H1 (cell line): ENCODE measurements at regions of chr17 and their contacts with region 1.

Region 1: GRCh38 chr17:32659419-32659842 is 172.6 kb downstream of the CDK5R1 start:
- DNase-seq: peak; percentile 39 to 86
- H3K4me3 ChIP-seq: no peak overlapping the region
- H3K27ac ChIP-seq: no peak overlapping the region
- H3K4me1 ChIP-seq: no peaks in the 10 kb centered on the region
- H3K27me3 ChIP-seq: no peaks in the 10 kb centered on the region
- CTCF ChIP-seq: peak; percentile 77 to 96 (median 90)
- EP300 ChIP-seq: no peak
- POLR2A ChIP-seq: no peak
- RAD21 ChIP-seq: peak; percentile 74 to 76

Region 2: GRCh38 chr17:32648450-32648849 is 11.0 kb before region 1 on chr17:
- CTCF ChIA-PET with region 1: interaction called, 26 read pairs
- POLR2A ChIA-PET with region 1: no interaction called
- DNase-seq: no peak
- H3K4me3 ChIP-seq: no peak overlapping the region
- H3K27ac ChIP-seq: no peak overlapping the region
- H3K4me1 ChIP-seq: no peaks in the 10 kb centered on the region
- H3K27me3 ChIP-seq: no peaks in the 10 kb centered on the region
- CTCF ChIP-seq: no peak
- EP300 ChIP-seq: no peak
- POLR2A ChIP-seq: no peak
- RAD21 ChIP-seq: no peak

Region 3: GRCh38 chr17:32671896-32672295 is 12.5 kb after region 1 on chr17:
- CTCF ChIA-PET with region 1: interaction called, 20 read pairs
- POLR2A ChIA-PET with region 1: interaction called, 4 read pairs
- DNase-seq: no peak
- H3K4me3 ChIP-seq: no peak overlapping the region
- H3K27ac ChIP-seq: no peak overlapping the region
- H3K4me1 ChIP-seq: no peaks in the 10 kb centered on the region; a peak in 1 of 7 replicates
- H3K27me3 ChIP-seq: no peaks in the 10 kb centered on the region
- CTCF ChIP-seq: no peak
- EP300 ChIP-seq: no peak
- POLR2A ChIP-seq: no peak
- RAD21 ChIP-seq: no peak

Region 4: DNA sequence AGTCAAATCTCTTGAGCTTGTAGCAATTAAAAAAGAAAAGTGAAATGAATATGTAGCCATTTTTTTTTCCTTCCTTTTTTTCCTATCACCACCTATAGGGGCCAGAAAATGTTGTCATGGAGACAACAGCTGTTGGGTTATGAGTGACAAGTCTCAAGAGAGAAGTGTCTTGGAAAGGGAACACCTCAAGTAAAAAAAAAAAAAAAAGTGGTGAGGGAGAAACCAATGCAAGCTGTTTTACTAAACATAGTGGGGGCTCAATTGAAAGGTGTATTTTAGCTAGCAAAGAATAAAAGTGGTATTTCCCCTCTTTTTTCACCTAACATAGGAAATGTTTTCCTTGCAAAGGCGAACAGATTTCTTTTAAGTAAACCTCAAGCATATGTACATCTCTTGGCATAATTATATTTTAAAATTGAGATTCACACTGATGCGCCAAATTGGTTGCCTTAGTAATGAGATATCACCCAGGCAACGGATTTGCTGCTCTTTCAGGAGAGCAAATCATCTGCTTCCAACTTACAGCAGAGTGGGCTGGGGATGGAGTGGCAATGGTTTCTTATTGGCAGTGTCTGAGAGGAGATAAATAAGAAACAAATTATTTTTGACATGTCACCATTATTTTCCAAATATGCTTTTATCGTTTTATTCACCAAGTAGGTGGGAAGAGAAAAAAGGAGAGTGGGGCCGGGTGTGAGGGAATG is 33.9 kb after region 1 on chr17:
- CTCF ChIA-PET with region 1: interaction called, 11 read pairs
- POLR2A ChIA-PET with region 1: no interaction called
- DNase-seq: no peak
- H3K4me3 ChIP-seq: no peak overlapping the region
- H3K27ac ChIP-seq: no peak overlapping the region
- H3K4me1 ChIP-seq: no peaks in the 10 kb centered on the region
- H3K27me3 ChIP-seq: no peaks in the 10 kb centered on the region
- CTCF ChIP-seq: no peak
- EP300 ChIP-seq: no peak
- POLR2A ChIP-seq: no peak
- RAD21 ChIP-seq: no peak

Region 5: DNA sequence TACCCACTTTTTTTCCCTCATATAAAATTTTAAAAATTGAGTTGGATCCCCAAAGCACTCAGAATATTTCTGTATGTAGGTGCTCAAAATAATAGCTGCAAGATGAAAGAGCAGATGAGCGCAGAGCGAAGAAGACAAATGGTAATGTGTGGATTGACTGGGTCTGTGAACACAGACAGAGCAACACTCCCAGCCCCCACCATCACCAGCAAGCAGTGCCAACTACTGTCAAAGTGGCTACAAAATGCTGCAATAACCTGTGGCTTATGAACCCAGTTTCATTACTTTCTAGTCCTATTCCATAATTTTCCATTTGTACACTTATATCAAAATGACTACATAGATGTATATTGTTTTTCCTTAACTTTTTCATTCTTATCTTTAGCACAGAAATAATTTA is 80.3 kb after region 1 on chr17:
- CTCF ChIA-PET with region 1: no interaction called
- POLR2A ChIA-PET with region 1: no interaction called
- DNase-seq: no peak
- H3K4me3 ChIP-seq: no peak overlapping the region
- H3K27ac ChIP-seq: no peak overlapping the region
- H3K4me1 ChIP-seq: no peaks in the 10 kb centered on the region
- H3K27me3 ChIP-seq: no peaks in the 10 kb centered on the region
- CTCF ChIP-seq: no peak
- EP300 ChIP-seq: no peak
- POLR2A ChIP-seq: no peak
- RAD21 ChIP-seq: no peak

Region 6: DNA sequence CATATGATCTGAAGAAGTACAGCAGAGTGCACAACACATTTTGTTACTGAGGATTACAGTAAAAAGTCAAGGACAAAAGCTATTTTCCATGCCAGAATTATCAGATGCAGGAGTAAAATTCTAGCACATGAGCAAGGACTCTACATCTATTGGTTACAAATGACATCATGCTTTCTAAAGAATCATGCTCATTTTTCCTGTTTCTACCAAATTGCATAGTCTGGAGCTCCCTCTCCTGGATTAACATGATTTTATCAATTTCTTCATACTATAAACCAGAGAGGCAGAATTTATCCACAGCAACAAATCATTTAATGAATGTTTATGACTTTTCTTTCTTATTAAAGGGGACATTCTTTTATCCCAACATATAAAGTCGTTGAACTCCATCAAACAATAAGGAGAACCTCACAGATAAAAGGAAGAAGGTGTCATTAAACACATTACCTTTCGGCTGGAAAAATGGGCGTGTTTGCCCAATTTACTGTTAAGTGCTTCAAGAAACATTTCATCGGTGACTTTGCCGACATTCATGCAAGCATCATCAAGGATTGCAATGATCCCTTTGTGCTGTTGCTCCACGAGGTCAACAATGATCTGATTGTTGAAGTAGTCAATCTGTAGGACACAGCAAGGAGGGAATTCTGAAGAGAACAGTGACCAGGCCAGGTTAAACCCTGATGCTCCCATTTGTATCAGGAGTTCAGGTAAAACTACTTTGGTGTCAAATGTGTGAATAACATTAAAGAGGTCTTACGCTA is 95.8 kb after region 1 on chr17:
- CTCF ChIA-PET with region 1: interaction called, 10 read pairs
- POLR2A ChIA-PET with region 1: no interaction called
- DNase-seq: no peak
- H3K4me3 ChIP-seq: no peak overlapping the region
- H3K27ac ChIP-seq: no peak overlapping the region
- H3K4me1 ChIP-seq: no peaks in the 10 kb centered on the region
- H3K27me3 ChIP-seq: no peaks in the 10 kb centered on the region
- CTCF ChIP-seq: peak in 2 of 3 experiments; percentile 27 to 28; a peak in 2 of 4 replicates
- EP300 ChIP-seq: no peak
- POLR2A ChIP-seq: no peak
- RAD21 ChIP-seq: peak; percentile 66 to 72